BJ (cell line): ENCODE measurements at regions of chr14 and their contacts with region 1.

Region 1: GRCh38 chr14:21136024-21136423 is 19.8 kb downstream of the OR5AU1 start:
- DNase-seq: no peak
- H3K4me3 ChIP-seq: no peak overlapping the region
- H3K27me3 ChIP-seq: no peaks in the 10 kb centered on the region
- CTCF ChIP-seq: peak; percentile 68

Region 2: DNA sequence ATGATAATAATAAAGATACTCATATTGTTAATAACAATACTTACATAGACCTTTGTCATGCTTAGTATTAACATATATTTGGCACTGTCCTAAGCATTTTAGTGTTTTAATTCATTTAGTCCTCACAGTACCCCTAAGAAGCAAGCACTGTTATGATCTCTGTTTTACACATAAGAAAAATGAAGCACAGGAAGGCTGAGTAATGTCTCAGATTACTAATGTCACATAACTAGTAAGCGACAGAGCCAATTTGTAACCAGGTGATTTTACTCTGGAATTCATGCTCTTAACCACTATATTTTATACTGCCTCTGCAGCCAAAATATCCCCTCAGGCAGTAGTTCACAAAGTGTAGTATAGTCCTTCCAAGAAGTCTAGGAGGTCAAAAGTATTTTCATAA is 14.9 kb before region 1 on chr14:
- CTCF ChIA-PET with region 1: interaction called, 21 read pairs
- POLR2A ChIA-PET with region 1: no interaction called
- DNase-seq: no peak
- H3K4me3 ChIP-seq: no peak overlapping the region
- H3K27me3 ChIP-seq: no peaks in the 10 kb centered on the region
- CTCF ChIP-seq: no peak

Region 3: GRCh38 chr14:21155963-21156362 is 19.9 kb after region 1 on chr14 and contains the start of gene OR5AU1:
- CTCF ChIA-PET with region 1: interaction called, 10 read pairs
- POLR2A ChIA-PET with region 1: no interaction called
- DNase-seq: no peak
- H3K4me3 ChIP-seq: no peak within 1 kb of the TSS
- H3K27me3 ChIP-seq: peaks cover 4% of the 10 kb centered on the region; the same call in 1 of the 2 replicates
- CTCF ChIP-seq: no peak
- polyA plus RNA-seq, gene OR5AU1: not detected in 2 replicates

Region 4: DNA sequence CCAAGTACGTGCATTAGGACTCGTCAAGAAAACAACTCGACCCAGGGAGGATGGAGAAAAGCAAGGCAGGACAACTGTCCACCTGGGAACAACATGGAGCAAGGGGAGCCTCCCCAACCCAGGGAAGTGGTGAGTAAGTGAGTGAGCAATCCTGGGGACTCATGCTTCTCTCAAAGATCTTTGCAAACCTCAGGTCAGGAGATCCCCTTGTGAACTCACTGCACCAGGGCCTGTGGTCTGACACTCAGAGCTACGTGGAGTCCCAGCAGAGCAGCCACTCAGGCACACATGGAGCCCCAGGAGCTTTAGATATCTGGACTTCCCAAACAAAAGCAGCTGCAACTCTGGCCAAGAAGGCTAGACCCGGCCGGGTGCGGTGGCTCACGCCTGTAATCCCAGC is 32.0 kb after region 1 on chr14:
- CTCF ChIA-PET with region 1: no interaction called
- POLR2A ChIA-PET with region 1: no interaction called
- DNase-seq: no peak
- H3K4me3 ChIP-seq: no peak overlapping the region
- H3K27me3 ChIP-seq: peaks cover 2% of the 10 kb centered on the region
- CTCF ChIP-seq: no peak

Region 5: DNA sequence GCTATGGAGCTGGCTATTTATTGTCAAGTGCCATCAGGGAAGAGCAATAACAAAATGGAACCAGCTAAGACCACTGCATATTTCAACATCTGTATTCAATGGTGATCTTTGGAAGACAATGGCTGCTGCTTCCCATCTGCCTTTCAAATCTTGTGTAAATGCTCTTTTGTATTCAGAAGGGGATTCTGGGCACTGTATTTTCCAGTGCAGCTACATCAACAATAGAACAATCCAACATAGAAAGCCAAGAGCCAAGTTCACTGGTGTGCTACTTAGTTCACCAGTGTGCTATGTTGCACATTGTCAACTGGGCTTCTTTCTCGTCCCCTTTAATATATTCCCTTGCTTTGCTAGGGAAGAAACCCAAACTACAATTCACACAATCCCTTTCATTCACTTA is 666.4 kb after region 1 on chr14:
- CTCF ChIA-PET with region 1: no interaction called
- POLR2A ChIA-PET with region 1: no interaction called
- DNase-seq: no peak
- H3K4me3 ChIP-seq: no peak overlapping the region
- H3K27me3 ChIP-seq: no peaks in the 10 kb centered on the region
- CTCF ChIP-seq: no peak

Region 6: DNA sequence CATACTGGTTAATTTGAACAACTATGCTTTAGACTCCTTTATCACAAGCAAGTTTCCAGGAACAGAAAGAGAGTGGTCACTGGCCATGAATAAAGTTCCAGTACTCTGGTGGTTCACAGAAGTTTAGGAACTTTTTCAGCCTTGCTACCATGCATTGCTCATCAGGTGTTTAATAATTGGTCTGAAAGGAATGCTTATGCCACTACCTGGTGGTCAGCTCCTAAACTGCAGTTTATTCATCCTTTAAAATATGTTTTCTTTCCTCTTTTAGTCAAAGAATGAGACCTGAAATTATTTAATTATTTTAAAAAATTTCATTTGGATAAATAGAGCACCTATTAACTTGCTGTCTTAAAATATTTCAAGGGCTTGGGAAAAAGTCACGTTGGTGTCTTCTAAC is 797.7 kb after region 1 on chr14:
- CTCF ChIA-PET with region 1: no interaction called
- POLR2A ChIA-PET with region 1: no interaction called
- DNase-seq: no peak
- H3K4me3 ChIP-seq: no peak overlapping the region
- H3K27me3 ChIP-seq: no peaks in the 10 kb centered on the region
- CTCF ChIP-seq: no peak